ENCODE measurements at regions of chr11 and their contacts with region 1.

Region 1: DNA sequence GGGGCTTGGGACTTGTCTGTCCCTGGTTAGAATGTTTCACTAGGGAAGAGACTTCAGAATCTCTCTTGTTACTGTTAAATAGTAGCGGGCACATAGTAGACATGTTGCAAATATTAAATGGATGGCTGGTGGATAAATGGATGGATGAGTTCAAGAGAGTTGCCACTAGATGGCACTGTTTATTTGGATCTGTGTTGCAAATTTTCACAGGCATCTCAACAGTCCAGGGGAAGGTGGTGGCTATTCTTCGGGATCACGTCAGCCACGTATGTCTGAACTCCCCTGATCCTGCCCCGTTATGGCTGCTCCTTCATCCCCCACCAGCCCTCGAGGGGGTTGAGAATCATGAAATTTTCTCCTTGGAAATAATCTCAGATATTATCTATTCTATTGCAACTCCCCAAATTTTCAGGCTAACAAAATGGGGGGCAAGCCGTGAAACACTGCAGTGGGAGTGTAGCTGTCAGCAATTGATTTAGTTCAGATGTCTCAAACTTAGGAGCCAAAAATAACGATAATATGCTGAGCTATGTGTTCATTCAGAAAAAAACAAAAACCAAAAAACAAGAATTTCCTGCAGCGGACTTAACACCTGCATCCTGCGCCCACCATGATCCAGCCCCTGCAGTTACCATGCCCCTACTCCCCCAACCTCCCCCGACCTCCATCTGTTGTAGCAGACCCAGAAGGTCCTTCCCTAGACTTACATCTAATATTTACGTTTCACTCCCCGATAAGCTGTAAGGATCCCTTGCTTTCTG is 29.1 kb upstream of the BIRC3 start:
- DNase-seq: peak in 2 of 10 donors; percentile 28 to 45
- H3K4me3 ChIP-seq: peak overlapping the region in 54 of 59 donors; percentile 13 to 62 (median 43)
- H3K27ac ChIP-seq: peak overlapping the region in 4 of 59 donors; percentile 25 to 65 (median 37)
- H3K27me3 ChIP-seq: no peaks in the 10 kb centered on the region
- CTCF ChIP-seq: peak; percentile 68 to 91 (median 82)

Region 2: GRCh38 chr11:102604877-102605276 is 316.7 kb after region 1 on chr11:
- intact Hi-C with region 1: loop called in 1 of 2 experiments (anchors 5 kb)
- DNase-seq: no peak
- H3K4me3 ChIP-seq: no peak overlapping the region
- H3K27ac ChIP-seq: no peak overlapping the region
- H3K27me3 ChIP-seq: no peaks in the 10 kb centered on the region
- CTCF ChIP-seq: no peak

Region 3: GRCh38 chr11:102666331-102666957 is 378.3 kb after region 1 on chr11:
- intact Hi-C with region 1: loop called in 1 of 2 experiments (anchors 5 kb)
- DNase-seq: no peak
- H3K4me3 ChIP-seq: no peak overlapping the region
- H3K27ac ChIP-seq: no peak overlapping the region
- H3K27me3 ChIP-seq: no peaks in the 10 kb centered on the region
- CTCF ChIP-seq: peak; percentile 53 to 89 (median 76)

Measured in dorsolateral prefrontal cortex (tissue), 120 donors.